Activated CD4-positive, alpha-beta memory T cell treated with anti-CD3 and anti-CD28 coated beads, Interleukin-2, amount 10 ng/mL, durations not matched to agents 7 days and 5 days (primary cell): ENCODE measurements at regions of chr4 and their contacts with region 1.

Region 1: GRCh38 chr4:25913851-25914669 is at the start of gene SMIM20:
- DNase-seq: peak; percentile 91
- H3K4me3 Mint-ChIP-seq: peak within 1 kb of the TSS; percentile 92
- H3K27ac Mint-ChIP-seq: peak within 1 kb of the TSS; percentile 90
- H3K4me1 Mint-ChIP-seq: peaks cover 23% of the 10 kb centered on the region
- H3K27me3 Mint-ChIP-seq: no peaks in the 10 kb centered on the region
- total RNA-seq, gene SMIM20: 11.5 to 14.4 TPM

Region 2: GRCh38 chr4:25862411-25863346 is 51.4 kb before region 1 on chr4 and contains the start of gene SEL1L3:
- CTCF ChIA-PET with region 1: interaction called, 5 read pairs
- POLR2A ChIA-PET with region 1: interaction called, 34 read pairs
- DNase-seq: peak; percentile 58
- H3K4me3 Mint-ChIP-seq: peak within 1 kb of the TSS; percentile 97
- H3K27ac Mint-ChIP-seq: peak within 1 kb of the TSS; percentile 95
- H3K4me1 Mint-ChIP-seq: peaks cover 50% of the 10 kb centered on the region
- H3K27me3 Mint-ChIP-seq: no peaks in the 10 kb centered on the region
- total RNA-seq, gene SEL1L3: 88.3 to 91.3 TPM

Region 3: GRCh38 chr4:25928379-25929297 is 14.6 kb after region 1 on chr4:
- CTCF ChIA-PET with region 1: no interaction called
- POLR2A ChIA-PET with region 1: interaction called, 10 read pairs
- DNase-seq: no peak
- H3K4me3 Mint-ChIP-seq: no peak overlapping the region
- H3K27ac Mint-ChIP-seq: no peak overlapping the region
- H3K4me1 Mint-ChIP-seq: peaks cover 5% of the 10 kb centered on the region
- H3K27me3 Mint-ChIP-seq: no peaks in the 10 kb centered on the region

Region 4: DNA sequence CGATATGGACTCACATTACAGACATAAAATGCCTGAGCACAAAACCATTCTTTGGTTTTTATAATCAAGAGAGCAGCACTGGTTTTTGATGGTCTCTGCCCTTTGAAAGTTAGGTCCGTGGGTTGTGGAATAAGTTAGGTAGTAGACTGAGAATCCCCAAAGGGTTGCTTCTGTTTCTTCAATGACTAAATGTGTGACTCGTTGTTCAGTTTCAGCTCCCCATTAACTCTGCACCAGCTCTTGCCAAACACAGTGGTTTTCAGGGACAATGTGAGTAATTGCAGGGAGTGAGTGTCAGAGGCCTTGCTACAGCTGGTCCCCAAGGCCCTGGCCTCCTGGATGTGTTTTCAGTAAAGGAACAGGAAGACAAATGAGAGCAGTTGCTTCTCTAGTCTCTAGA is 24.7 kb after region 1 on chr4:
- CTCF ChIA-PET with region 1: interaction called, 4 read pairs
- POLR2A ChIA-PET with region 1: interaction called, 23 read pairs
- DNase-seq: peak; percentile 46
- H3K4me3 Mint-ChIP-seq: no peak overlapping the region
- H3K27ac Mint-ChIP-seq: peak overlapping the region; percentile 74
- H3K4me1 Mint-ChIP-seq: peaks cover 37% of the 10 kb centered on the region
- H3K27me3 Mint-ChIP-seq: no peaks in the 10 kb centered on the region